Activated T-helper 1 cell treated with anti-CD3 and anti-CD28 coated beads, Interleukin-12 subunit alpha, Interleukin-12 subunit beta, Interleukin-2, Interleukin-4 antibody, amounts not matched to agents 30 ng/mL and 10 ng/mL and 1 ng/mL, durations not matched to agents 14 hours and 24 hours and 36 hours (primary cell): ENCODE measurements at regions of chrX and their contacts with region 1.

Region 1: GRCh38 chrX:24479924-24480323 is 14.8 kb downstream of the PDK3 start:
- DNase-seq: peak; percentile 71
- H3K4me3 Mint-ChIP-seq: peak overlapping the region; percentile 65
- H3K27ac Mint-ChIP-seq: peak overlapping the region; percentile 92
- H3K4me1 Mint-ChIP-seq: peaks cover 45% of the 10 kb centered on the region
- H3K27me3 Mint-ChIP-seq: no peaks in the 10 kb centered on the region

Region 2: GRCh38 chrX:23667239-23668177 is 812.4 kb before region 1 on chrX and contains the start of gene PRDX4:
- intact Hi-C with region 1: loop called (anchors 10 kb)
- DNase-seq: peak; percentile 66
- H3K4me3 Mint-ChIP-seq: peak within 1 kb of the TSS; percentile 88
- H3K27ac Mint-ChIP-seq: peak within 1 kb of the TSS; percentile 94
- H3K4me1 Mint-ChIP-seq: peaks cover 37% of the 10 kb centered on the region
- H3K27me3 Mint-ChIP-seq: no peaks in the 10 kb centered on the region
- total RNA-seq, gene PRDX4: 75.5 and 83.2 TPM in 2 replicates

Region 3: DNA sequence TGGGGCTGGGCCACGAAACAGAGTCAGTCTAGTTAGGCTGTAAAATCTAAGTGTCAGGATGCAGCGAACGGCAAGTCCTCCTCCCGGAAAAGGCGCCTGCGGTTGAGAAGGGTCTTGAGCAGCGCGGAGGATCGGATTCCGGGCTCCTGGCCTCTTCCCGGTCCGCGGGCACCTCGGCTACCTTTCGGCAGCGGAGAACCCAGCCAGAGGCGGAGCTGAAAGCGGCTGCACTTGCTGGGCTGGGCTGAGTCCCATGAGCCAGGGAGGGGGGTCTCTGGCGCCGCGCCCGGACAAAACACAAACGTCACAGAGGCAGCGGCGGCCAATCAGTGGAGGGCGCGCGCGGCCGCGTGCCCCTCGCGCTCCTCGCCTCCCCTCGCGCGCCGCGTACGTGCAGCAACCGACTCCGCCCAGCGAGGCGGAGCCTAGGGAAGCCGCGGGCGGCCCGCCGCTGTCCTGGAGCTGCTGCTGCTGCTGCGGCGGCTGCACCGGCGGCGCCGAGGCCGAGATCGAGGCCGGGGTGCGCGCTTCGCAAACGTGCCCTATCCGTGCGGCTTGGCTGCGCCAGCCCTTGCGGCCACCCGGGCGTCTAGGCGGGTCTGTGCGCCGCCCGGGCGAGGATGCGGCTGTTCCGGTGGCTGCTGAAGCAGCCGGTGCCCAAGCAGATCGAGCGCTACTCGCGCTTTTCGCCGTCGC is 14.9 kb before region 1 on chrX and contains the start of gene PDK3:
- intact Hi-C with region 1: loop called (anchors 1 kb)
- DNase-seq: peak; percentile 80
- H3K4me3 Mint-ChIP-seq: peak within 1 kb of the TSS; percentile 85
- H3K27ac Mint-ChIP-seq: peak within 1 kb of the TSS; percentile 87
- H3K4me1 Mint-ChIP-seq: peaks cover 33% of the 10 kb centered on the region
- H3K27me3 Mint-ChIP-seq: peaks cover 2% of the 10 kb centered on the region
- total RNA-seq, gene PDK3: 24.1 and 27.2 TPM in 2 replicates

Region 4: GRCh38 chrX:24513416-24513815 is 33.5 kb after region 1 on chrX:
- intact Hi-C with region 1: loop called (anchors 1 kb)
- DNase-seq: peak; percentile 30
- H3K4me3 Mint-ChIP-seq: no peak overlapping the region
- H3K27ac Mint-ChIP-seq: peak overlapping the region; percentile 66
- H3K4me1 Mint-ChIP-seq: peaks cover 24% of the 10 kb centered on the region
- H3K27me3 Mint-ChIP-seq: no peaks in the 10 kb centered on the region